AG04449 (cell line): ENCODE measurements at regions of chr20 and their contacts with region 1.

Region 1: DNA sequence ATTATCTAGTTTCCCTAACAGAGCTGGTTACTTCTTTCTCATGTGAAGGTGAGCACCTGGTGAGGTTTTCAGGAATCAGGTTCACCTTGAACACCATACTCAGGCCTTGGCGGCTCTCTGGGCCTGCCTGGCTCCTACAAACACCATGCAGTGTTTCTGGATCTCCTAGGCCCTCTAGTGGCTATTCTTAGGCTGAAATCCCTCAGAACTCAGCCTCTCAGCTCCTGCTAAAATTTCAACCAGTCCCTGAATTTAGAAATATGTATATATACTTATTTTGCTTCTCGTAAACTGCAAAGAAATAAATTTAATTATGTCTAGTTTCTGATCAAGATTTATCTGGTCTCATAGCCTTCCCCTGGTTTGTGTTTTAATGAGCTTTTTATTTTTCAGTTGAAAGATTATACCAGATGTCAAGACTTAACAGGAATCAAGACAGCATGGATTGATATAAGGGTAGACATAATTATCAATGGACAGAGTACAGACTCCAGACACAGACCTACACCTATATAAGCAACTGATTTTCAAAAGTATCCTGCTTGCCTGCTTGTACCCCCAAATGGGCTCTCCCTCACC is 55.9 kb downstream of the ANKEF1 start:
- DNase-seq: no peak
- H3K4me3 ChIP-seq: no peak overlapping the region
- CTCF ChIP-seq: peak; percentile 76

Region 2: DNA sequence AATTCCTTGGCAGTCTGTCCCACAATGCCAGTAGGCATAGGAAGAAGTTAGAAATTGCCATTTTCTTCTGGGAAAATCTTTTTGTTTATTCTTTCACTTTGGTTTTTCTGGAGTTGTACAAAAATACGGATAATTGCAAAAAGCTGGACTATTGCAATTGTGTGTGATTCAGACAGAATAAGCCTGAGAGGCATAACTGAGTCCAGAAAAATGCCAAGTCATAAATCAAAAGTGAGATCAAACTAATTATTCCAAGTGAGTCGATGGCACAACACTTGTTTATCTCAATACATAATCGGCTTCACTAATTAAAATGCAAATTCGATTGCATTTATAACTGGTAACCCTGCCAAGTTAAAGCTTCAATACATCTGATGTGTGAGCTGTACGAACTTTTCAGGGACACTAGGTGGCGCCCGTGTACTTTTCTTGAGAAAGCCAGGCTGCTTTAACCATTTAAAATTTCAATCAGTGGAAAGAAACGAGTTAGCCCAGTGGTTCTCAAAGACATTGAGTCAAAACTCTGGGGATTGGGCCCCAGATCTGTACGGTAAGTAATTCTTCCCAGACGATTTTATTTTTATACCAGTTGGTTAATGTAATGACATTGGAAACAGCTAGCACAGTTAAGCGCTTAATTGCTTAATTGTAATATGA is 473.7 kb before region 1 on chr20:
- CTCF ChIA-PET with region 1: interaction called, 22 read pairs
- POLR2A ChIA-PET with region 1: no interaction called
- DNase-seq: peak; percentile 10
- H3K4me3 ChIP-seq: no peak overlapping the region
- CTCF ChIP-seq: peak; percentile 67

Region 3: GRCh38 chr20:9978397-9979004 is 112.2 kb before region 1 on chr20:
- CTCF ChIA-PET with region 1: interaction called, 250 read pairs
- POLR2A ChIA-PET with region 1: no interaction called
- DNase-seq: peak; percentile 58
- H3K4me3 ChIP-seq: no peak overlapping the region; the same call in 1 of the 2 replicates
- CTCF ChIP-seq: peak; percentile 69

Region 4: DNA sequence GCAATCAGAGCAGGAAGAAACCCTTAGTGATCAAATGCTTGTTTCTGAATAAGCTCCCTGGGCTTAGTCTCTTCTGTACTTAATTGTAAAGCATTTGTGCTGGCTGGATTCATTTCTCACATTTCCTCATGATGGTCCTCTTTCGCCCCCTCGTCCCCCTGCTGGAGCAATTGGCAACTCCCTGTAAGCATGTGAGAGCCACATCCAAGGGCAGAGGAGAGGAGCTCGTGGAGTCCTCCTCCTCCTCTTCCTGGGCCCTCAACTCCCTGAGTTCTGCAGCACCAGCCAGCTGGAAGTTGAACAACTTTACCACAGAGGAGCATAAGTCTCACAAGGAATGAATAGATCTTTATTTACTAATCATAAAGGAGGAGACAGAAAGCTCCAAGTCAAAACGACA is 43.2 kb before region 1 on chr20:
- CTCF ChIA-PET with region 1: interaction called, 11 read pairs
- POLR2A ChIA-PET with region 1: no interaction called
- DNase-seq: no peak
- H3K4me3 ChIP-seq: no peak overlapping the region
- CTCF ChIP-seq: peak; percentile 23

Region 5: DNA sequence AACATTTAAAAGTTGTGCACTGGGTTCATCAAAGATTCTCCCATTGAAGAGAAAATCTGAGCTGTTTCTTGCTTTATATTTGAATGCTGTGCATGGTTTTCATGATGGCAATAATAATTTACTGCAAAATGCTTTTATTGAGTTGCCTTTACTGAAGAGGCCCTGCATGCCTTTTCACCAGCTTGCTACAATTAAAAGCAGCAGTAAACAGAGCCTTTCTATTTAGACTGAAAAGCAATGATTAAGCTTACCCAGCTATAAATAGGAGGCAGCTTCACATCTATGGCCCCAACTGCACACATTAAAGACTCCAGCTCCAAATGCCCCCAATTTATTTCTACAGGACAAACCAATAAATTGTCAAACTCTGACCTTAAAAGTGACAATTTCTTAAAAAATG is 14.4 kb after region 1 on chr20:
- CTCF ChIA-PET with region 1: interaction called, 54 read pairs
- POLR2A ChIA-PET with region 1: no interaction called
- DNase-seq: no peak
- H3K4me3 ChIP-seq: no peak overlapping the region
- CTCF ChIP-seq: no peak

Region 6: DNA sequence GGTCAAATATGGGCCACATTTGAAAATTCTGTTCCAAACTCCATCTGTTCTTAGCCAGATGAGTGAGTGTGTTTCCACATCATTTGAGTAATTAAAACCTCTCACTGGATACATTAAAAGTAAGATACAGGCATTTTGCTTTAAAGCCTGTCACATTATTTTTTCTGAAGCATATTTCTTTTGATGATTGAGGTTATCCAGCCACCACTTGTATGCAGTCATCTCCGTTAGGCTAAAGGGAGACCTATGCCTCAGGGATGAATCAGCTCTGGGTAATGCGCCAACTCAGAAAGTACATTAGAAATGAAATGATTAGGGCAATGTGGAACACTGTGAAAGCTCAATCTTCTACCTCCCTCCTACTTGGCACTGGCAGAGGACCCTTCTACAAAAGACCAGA is 218.6 kb after region 1 on chr20:
- CTCF ChIA-PET with region 1: no interaction called
- POLR2A ChIA-PET with region 1: no interaction called
- DNase-seq: peak; percentile 70
- H3K4me3 ChIP-seq: no peak overlapping the region
- CTCF ChIP-seq: no peak

Region 7: GRCh38 chr20:10427060-10427692 is 336.5 kb after region 1 on chr20:
- CTCF ChIA-PET with region 1: interaction called, 73 read pairs
- POLR2A ChIA-PET with region 1: no interaction called
- DNase-seq: no peak
- H3K4me3 ChIP-seq: no peak overlapping the region
- CTCF ChIP-seq: peak; percentile 68